Posterior vena cava (tissue), 2 donors: ENCODE measurements at regions of chr1 and their contacts with region 1.

Region 1: DNA sequence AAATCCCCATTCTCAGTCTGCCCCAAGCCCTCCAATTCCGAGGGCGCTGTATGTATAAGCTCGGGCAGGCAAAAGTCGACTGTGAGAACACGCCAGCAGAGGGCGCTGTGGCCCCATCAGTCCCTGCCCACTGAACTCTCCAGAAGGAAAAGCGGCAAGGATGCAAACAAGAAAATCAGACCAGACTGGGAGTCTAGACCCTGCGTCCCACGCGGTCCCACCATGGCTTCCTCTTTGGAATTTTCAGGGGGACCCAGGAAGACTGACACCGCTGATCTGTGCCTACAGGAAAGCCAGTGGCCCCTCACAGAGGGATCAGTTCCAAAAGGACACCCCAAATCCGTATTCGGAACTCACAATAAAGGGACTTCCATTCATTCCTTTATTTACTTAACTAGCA is 19.5 kb downstream of the TEX35 start:
- DNase-seq: peak; percentile 94

Region 2: GRCh38 chr1:179206812-179207211 is 674.4 kb after region 1 on chr1:
- intact Hi-C with region 1: loop called in 1 of 2 experiments (anchors 10 kb)
- DNase-seq: no peak